Dendritic cell treated with granulocyte-macrophage colony-stimulating factor and Interleukin-4, amounts not matched to agents 40 ng/mL and 50 ng/mL, for 4 days (primary cell): ENCODE measurements at regions of chr9 and their contacts with region 1.

Region 1: DNA sequence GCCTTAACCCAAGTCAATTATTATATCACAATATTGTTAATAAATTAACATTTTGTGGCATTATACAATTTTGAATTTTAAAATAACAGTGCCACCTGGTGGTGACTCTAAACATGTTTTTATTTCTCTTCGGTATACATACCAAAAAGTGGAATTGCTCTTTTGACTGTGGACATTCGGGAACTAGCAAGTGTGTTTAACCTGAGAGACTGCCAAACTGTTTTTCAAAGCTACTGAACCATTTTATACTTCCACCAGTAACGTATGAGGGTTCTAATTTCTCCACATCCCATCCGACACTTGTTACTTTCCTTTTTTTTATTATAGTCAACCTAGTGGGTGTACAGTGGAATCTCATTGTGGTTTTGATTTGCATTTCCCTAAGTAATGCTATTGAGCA is 18.3 kb upstream of the HSDL2 start:
- H3K4me3 Mint-ChIP-seq: no peak overlapping the region
- H3K27ac Mint-ChIP-seq: no peak overlapping the region
- H3K4me1 Mint-ChIP-seq: no peaks in the 10 kb centered on the region
- H3K27me3 Mint-ChIP-seq: peaks cover 2% of the 10 kb centered on the region

Region 2: GRCh38 chr9:111016426-111017045 is 1345.1 kb before region 1 on chr9:
- intact Hi-C with region 1: no loop called
- H3K4me3 Mint-ChIP-seq: no peak overlapping the region
- H3K27ac Mint-ChIP-seq: no peak overlapping the region
- H3K4me1 Mint-ChIP-seq: peaks cover 16% of the 10 kb centered on the region
- H3K27me3 Mint-ChIP-seq: peaks cover 5% of the 10 kb centered on the region

Region 3: DNA sequence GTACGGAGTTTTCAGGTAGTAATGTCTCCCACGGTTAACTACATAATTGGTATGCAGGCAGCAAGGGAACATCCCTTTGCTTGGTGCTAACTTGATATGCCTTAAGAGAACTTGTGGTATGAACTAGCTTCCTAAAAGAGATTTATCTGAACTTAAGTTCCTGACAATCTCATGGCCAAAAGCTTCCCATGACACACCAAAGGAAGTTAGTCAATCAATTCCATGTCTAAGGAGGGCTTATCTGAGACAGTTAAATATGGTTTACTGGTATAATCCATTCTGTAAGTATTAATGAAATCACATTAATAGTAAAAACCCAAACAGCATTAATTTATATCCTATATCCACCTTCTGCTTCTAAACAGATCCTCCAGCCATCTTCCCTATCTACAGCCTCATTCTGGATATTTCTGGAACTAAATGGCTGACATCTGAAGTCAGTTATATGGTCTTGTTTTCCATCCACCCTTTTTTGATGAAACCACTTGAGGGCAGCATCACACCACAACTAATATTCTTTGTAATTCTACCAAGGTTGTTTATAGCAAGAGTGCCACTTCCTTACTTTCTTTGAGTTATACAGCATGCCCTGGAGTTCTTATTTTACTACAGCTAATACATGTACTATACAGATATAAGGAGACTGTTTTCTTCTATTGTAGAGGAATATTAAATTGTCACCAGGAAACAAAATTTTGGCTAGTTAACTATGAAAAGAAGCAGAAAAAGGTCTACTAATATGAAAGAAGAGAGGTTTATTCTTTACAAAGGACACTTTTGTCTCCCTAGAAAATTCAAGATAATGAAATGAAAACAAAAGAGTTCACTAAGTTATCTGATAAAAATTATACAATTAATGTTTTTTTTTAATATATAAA is 601.6 kb before region 1 on chr9:
- intact Hi-C with region 1: loop called (anchors 5 kb)
- H3K4me3 Mint-ChIP-seq: no peak overlapping the region
- H3K27ac Mint-ChIP-seq: no peak overlapping the region
- H3K4me1 Mint-ChIP-seq: no peaks in the 10 kb centered on the region
- H3K27me3 Mint-ChIP-seq: no peaks in the 10 kb centered on the region

Region 4: GRCh38 chr9:112086627-112087026 is 275.0 kb before region 1 on chr9:
- intact Hi-C with region 1: loop called (anchors 2 kb)
- H3K4me3 Mint-ChIP-seq: no peak overlapping the region
- H3K27ac Mint-ChIP-seq: peak overlapping the region; percentile 3
- H3K4me1 Mint-ChIP-seq: no peaks in the 10 kb centered on the region
- H3K27me3 Mint-ChIP-seq: no peaks in the 10 kb centered on the region

Region 5: GRCh38 chr9:112097712-112098688 is 263.6 kb before region 1 on chr9:
- intact Hi-C with region 1: loop called (anchors 1 kb)
- H3K4me3 Mint-ChIP-seq: no peak overlapping the region
- H3K27ac Mint-ChIP-seq: peak overlapping the region; percentile 65
- H3K4me1 Mint-ChIP-seq: peaks cover 39% of the 10 kb centered on the region
- H3K27me3 Mint-ChIP-seq: no peaks in the 10 kb centered on the region